ENCODE measurements at regions of chr11 and their contacts with region 1.

Region 1: GRCh38 chr11:118240999-118241768 is 11.0 kb downstream of the MPZL3 start:
- DNase-seq: peak; percentile 65
- H3K4me3 Mint-ChIP-seq: peak overlapping the region; percentile 78
- H3K27ac Mint-ChIP-seq: peak overlapping the region; percentile 95
- H3K4me1 Mint-ChIP-seq: peaks cover 84% of the 10 kb centered on the region
- H3K27me3 Mint-ChIP-seq: no peaks in the 10 kb centered on the region

Region 2: DNA sequence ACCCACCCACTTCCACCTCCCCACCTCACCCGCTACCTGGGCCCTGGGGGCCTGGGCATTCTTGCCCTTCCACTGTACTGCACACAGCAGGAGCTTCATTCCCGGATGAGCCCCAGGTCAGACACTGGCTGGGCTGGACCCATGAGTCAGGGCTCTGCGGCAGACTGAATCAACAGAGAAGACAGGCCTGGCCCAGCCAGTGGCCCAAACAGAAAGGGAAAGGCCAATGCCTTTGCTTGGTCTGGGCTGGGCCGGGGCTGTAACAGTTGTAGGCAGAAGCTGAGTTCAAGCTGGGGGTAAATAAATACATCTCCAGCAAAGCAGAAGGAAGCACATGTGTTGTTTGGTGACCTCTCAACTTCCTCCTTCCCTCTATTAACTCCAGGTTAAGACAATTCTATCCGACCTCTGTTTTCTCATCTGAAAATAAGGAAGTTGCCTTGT is 152.7 kb before region 1 on chr11:
- intact Hi-C with region 1: no loop called
- DNase-seq: no peak
- H3K4me3 Mint-ChIP-seq: no peak overlapping the region
- H3K27ac Mint-ChIP-seq: no peak overlapping the region
- H3K4me1 Mint-ChIP-seq: no peaks in the 10 kb centered on the region
- H3K27me3 Mint-ChIP-seq: peaks cover 4% of the 10 kb centered on the region

Region 3: DNA sequence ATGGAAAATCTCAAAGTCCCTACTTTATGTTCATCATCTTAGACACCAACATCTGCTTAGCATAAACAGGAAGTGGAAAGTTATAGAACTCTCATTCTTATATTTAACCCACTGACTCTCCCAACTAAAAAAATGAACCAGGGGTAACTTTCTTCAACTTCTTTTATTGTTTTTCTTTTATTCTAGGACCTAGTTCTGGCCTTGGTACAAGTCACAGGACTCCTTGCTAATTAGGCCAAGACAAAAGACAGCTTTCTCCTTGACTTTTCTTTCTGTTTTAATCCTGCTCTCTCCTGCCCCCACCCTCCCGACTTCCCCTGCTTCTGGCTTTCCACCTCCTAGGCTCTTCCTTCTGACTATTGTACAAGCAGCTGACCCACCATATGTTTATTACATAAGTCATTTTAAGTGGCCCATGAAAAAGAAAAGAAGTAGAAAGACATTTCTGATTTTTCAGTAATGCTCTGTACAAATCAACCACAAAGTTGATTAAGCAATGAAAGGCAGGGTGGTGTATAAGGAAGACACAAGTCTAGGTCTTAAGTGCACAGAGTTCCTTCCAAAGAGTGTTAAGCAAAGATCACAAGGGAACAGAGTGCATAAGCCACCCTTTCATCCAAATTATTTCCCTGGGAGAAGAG is 34.7 kb before region 1 on chr11:
- intact Hi-C with region 1: loop called (anchors 1 kb)
- DNase-seq: no peak
- H3K4me3 Mint-ChIP-seq: peak overlapping the region; percentile 71
- H3K27ac Mint-ChIP-seq: no peak overlapping the region
- H3K4me1 Mint-ChIP-seq: peaks cover 53% of the 10 kb centered on the region
- H3K27me3 Mint-ChIP-seq: no peaks in the 10 kb centered on the region

Region 4: GRCh38 chr11:118216621-118217481 is 24.3 kb before region 1 on chr11:
- intact Hi-C with region 1: loop called (anchors 1 kb)
- DNase-seq: no peak
- H3K4me3 Mint-ChIP-seq: peak overlapping the region; percentile 82
- H3K27ac Mint-ChIP-seq: peak overlapping the region; percentile 97
- H3K4me1 Mint-ChIP-seq: peaks cover 93% of the 10 kb centered on the region
- H3K27me3 Mint-ChIP-seq: no peaks in the 10 kb centered on the region

Region 5: GRCh38 chr11:118227865-118228785 is 13.1 kb before region 1 on chr11:
- intact Hi-C with region 1: loop called (anchors 1 kb)
- DNase-seq: peak; percentile 47
- H3K4me3 Mint-ChIP-seq: peak overlapping the region; percentile 67
- H3K27ac Mint-ChIP-seq: peak overlapping the region; percentile 95
- H3K4me1 Mint-ChIP-seq: peaks cover 52% of the 10 kb centered on the region
- H3K27me3 Mint-ChIP-seq: no peaks in the 10 kb centered on the region

Region 6: GRCh38 chr11:118281284-118281683 is 40.1 kb after region 1 on chr11:
- intact Hi-C with region 1: loop called (anchors 5 kb)
- DNase-seq: no peak
- H3K4me3 Mint-ChIP-seq: no peak overlapping the region
- H3K27ac Mint-ChIP-seq: peak overlapping the region; percentile 69
- H3K4me1 Mint-ChIP-seq: peaks cover 50% of the 10 kb centered on the region
- H3K27me3 Mint-ChIP-seq: no peaks in the 10 kb centered on the region

Region 7: GRCh38 chr11:118304568-118305248 is 63.5 kb after region 1 on chr11 and contains the start of gene CD3E:
- intact Hi-C with region 1: loop called (anchors 2 kb)
- DNase-seq: peak; percentile 64
- H3K4me3 Mint-ChIP-seq: peak within 1 kb of the TSS; percentile 89
- H3K27ac Mint-ChIP-seq: peak within 1 kb of the TSS; percentile 100
- H3K4me1 Mint-ChIP-seq: peaks cover 47% of the 10 kb centered on the region
- H3K27me3 Mint-ChIP-seq: no peaks in the 10 kb centered on the region
- total RNA-seq, gene CD3E: 518 and 529 TPM in 2 replicates

Region 8: GRCh38 chr11:118448294-118448693 is 207.1 kb after region 1 on chr11:
- intact Hi-C with region 1: loop called (anchors 5 kb)
- DNase-seq: no peak
- H3K4me3 Mint-ChIP-seq: no peak overlapping the region
- H3K27ac Mint-ChIP-seq: peak overlapping the region; percentile 9
- H3K4me1 Mint-ChIP-seq: peaks cover 56% of the 10 kb centered on the region
- H3K27me3 Mint-ChIP-seq: no peaks in the 10 kb centered on the region